Astrocyte of the cerebellum (primary cell): ENCODE measurements at regions of chr20 and their contacts with region 1.

Region 1: DNA sequence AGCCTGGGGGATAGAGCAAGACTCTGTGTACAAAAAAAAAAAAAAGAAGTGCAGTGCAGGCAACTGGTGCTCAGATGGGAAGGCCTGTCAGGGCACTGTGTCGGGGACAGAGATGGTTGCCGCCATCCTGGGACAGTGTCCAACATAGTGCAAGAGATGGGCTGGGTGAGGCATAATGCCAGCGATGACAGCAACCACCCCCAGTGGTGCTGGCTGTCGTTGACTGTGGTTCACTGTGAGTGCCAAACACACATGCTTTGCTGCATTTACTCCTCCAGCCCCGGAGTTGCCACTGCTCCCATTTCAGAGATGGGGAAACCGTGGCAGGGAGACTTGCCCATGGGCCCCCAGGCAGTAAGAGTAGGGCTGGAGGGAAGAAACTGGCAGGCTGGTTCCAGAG is 5.2 kb upstream of the C20orf203 start:
- DNase-seq: no peak
- H3K4me3 ChIP-seq: no peak overlapping the region
- CTCF ChIP-seq: no peak

Region 2: DNA sequence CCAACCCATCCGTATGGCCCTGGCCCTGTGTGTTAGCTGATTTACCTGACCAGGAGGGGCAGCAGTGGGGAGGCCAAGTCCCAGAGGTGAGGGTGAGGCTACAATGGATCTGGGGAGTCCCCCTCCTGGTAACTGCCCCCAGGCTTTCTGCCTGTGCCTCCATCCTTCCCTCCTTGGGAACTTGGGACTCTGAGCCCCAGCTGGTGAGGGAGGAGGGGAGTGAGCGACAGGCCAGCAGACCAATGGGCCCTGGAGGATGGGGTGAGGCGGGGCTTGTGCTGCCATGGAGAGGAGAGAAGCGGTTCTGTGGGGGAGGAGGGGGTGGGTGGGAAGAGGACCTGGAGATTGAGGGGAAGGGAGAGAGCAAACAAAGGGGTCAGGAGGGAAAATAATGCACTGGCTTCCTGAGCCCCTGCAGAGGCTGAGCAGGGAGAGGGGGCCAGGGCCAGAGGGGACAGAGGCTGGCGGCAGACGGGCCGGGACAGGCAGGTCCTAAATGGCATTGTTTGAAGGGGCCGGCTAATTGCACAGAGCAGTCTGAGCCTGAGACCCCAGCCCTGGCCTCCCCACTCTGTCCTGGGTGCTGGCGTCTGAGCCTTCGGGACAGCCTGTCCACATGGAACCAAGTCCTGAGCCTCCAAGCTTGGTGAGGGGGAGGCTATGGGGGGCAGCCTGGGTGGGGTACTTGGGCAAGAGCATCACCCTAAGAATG is 100.7 kb after region 1 on chr20:
- in situ Hi-C with region 1: loop called (anchors 5 kb)
- DNase-seq: no peak
- H3K4me3 ChIP-seq: no peak overlapping the region
- CTCF ChIP-seq: no peak